GM12878 (cell line): ENCODE measurements at regions of chr15 and their contacts with region 1.

Region 1: DNA sequence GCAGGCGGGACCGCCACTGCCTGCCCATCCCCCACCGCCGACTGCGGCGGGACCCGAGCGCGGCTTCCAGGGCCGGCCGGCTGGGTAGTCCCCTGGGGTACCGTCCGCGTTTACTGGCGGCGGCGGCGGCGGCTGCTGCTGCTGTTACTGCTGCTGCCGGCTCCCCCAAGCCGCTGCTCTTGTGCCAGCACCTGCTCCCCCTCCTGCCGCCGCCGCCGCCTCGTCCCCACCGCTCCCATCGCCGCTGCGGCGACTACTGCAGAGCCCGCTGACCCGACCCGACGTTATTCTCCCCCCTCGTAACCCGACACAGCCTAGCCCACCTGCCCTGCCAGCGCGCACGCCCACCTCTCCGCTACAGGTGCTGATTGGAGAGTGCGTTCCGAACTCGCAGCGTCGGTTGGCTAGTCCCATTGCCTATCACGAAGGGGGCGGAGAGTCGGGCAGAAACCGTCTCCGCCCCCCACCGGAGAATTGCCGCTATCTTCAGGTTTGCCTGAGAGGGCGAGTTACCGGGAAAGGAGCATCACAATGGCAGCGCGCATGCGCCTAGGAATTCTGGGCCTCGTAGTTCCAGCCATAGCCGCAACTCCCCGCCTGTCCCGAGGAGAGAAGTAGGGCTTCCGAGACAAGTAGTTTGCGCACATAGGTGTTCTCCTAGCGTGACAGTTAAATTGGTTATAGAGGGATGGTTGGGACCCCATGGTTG is at the start of gene TTBK2:
- DNase-seq: peak; percentile 95
- ATAC-seq: peak; percentile 98
- H3K4me3 ChIP-seq: peak within 1 kb of the TSS; percentile 80
- H3K27ac ChIP-seq: peak within 1 kb of the TSS; percentile 64
- H3K4me1 ChIP-seq: peaks cover 12% of the 10 kb centered on the region
- H3K27me3 ChIP-seq: no peaks in the 10 kb centered on the region
- CTCF ChIP-seq: no peak
- EP300 ChIP-seq: no peak
- POLR2A ChIP-seq: peak; percentile 87
- RAD21 ChIP-seq: no peak
- polyA plus RNA-seq, gene TTBK2: 0.66 to 0.82 TPM

Region 2: GRCh38 chr15:42184296-42184695 is 736.4 kb before region 1 on chr15:
- CTCF ChIA-PET with region 1: no interaction called
- POLR2A ChIA-PET with region 1: no interaction called
- RAD21 ChIA-PET with region 1: no interaction called
- SMC1A ChIA-PET with region 1: no interaction called
- in situ Hi-C with region 1: no loop called
- intact Hi-C with region 1: no loop called
- DNase-seq: no peak
- ATAC-seq: peak; percentile 66
- H3K4me3 ChIP-seq: no peak overlapping the region
- H3K27ac ChIP-seq: no peak overlapping the region
- H3K4me1 ChIP-seq: peaks cover 5% of the 10 kb centered on the region
- H3K27me3 ChIP-seq: no peaks in the 10 kb centered on the region
- CTCF ChIP-seq: no peak
- EP300 ChIP-seq: no peak
- POLR2A ChIP-seq: no peak
- RAD21 ChIP-seq: no peak

Region 3: GRCh38 chr15:42404461-42405235 is 516.0 kb before region 1 on chr15:
- CTCF ChIA-PET with region 1: no interaction called
- POLR2A ChIA-PET with region 1: no interaction called
- RAD21 ChIA-PET with region 1: no interaction called
- SMC1A ChIA-PET with region 1: no interaction called
- in situ Hi-C with region 1: no loop called
- intact Hi-C with region 1: no loop called
- DNase-seq: no peak
- ATAC-seq: no peak
- H3K4me3 ChIP-seq: no peak overlapping the region
- H3K27ac ChIP-seq: no peak overlapping the region
- H3K4me1 ChIP-seq: peaks cover 14% of the 10 kb centered on the region
- H3K27me3 ChIP-seq: no peaks in the 10 kb centered on the region
- CTCF ChIP-seq: no peak
- EP300 ChIP-seq: no peak
- POLR2A ChIP-seq: no peak
- RAD21 ChIP-seq: no peak

Region 4: DNA sequence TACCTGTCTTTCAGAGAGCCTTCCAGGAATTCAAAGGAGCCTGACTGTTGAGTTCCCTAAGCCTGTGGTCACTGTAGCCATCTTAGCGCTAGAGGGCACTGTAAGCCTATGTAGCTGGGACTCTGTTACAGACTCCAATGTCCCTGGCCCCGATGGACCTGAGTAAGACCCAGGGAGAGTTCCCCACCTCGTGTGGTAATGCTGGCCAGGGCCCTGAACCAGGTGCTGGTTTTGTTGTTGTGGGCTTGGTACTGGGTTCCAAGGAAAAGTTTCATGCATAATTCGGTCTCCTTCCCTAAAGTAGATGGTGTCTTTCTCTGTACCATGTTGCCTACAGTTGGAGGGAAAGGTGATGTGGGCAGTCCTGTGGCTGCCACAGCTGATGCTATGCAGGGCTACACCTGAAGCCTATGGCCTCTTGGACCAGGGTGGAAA is 216.2 kb before region 1 on chr15:
- CTCF ChIA-PET with region 1: interaction called, 75 read pairs
- POLR2A ChIA-PET with region 1: no interaction called
- RAD21 ChIA-PET with region 1: interaction called, 22 read pairs
- SMC1A ChIA-PET with region 1: interaction called, 16 read pairs
- in situ Hi-C with region 1: loop called (anchors 10 kb)
- intact Hi-C with region 1: loop called (anchors 2 kb)
- DNase-seq: peak; percentile 24
- ATAC-seq: peak; percentile 100
- H3K4me3 ChIP-seq: no peak overlapping the region
- H3K27ac ChIP-seq: no peak overlapping the region
- H3K4me1 ChIP-seq: no peaks in the 10 kb centered on the region
- H3K27me3 ChIP-seq: no peaks in the 10 kb centered on the region
- CTCF ChIP-seq: peak; percentile 87 to 89 (median 89)
- EP300 ChIP-seq: no peak
- POLR2A ChIP-seq: no peak
- RAD21 ChIP-seq: peak; percentile 95

Region 5: GRCh38 chr15:42736793-42737528 is 183.7 kb before region 1 on chr15 and contains the start of gene CDAN1:
- CTCF ChIA-PET with region 1: interaction called, 26 read pairs
- POLR2A ChIA-PET with region 1: interaction called, 7 read pairs
- RAD21 ChIA-PET with region 1: interaction called, 6 read pairs
- SMC1A ChIA-PET with region 1: interaction called, 5 read pairs
- in situ Hi-C with region 1: no loop called
- intact Hi-C with region 1: loop called (anchors 10 kb)
- DNase-seq: no peak
- ATAC-seq: peak; percentile 97
- H3K4me3 ChIP-seq: peak within 1 kb of the TSS; percentile 88
- H3K27ac ChIP-seq: peak within 1 kb of the TSS; percentile 76
- H3K4me1 ChIP-seq: peaks cover 18% of the 10 kb centered on the region
- H3K27me3 ChIP-seq: no peaks in the 10 kb centered on the region
- CTCF ChIP-seq: no peak
- EP300 ChIP-seq: no peak
- POLR2A ChIP-seq: peak; percentile 93
- RAD21 ChIP-seq: no peak
- polyA plus RNA-seq, gene CDAN1: 0.56 to 1.6 TPM

Region 6: GRCh38 chr15:42800731-42801474 is 119.8 kb before region 1 on chr15:
- CTCF ChIA-PET with region 1: interaction called, 23 read pairs
- POLR2A ChIA-PET with region 1: no interaction called
- RAD21 ChIA-PET with region 1: interaction called, 6 read pairs
- SMC1A ChIA-PET with region 1: interaction called, 3 read pairs
- in situ Hi-C with region 1: no loop called
- intact Hi-C with region 1: no loop called
- DNase-seq: no peak
- ATAC-seq: no peak
- H3K4me3 ChIP-seq: no peak overlapping the region
- H3K27ac ChIP-seq: no peak overlapping the region
- H3K4me1 ChIP-seq: no peaks in the 10 kb centered on the region
- H3K27me3 ChIP-seq: no peaks in the 10 kb centered on the region
- CTCF ChIP-seq: peak in 2 of 3 experiments; percentile 11 to 28; a peak in 1 of 6 replicates
- EP300 ChIP-seq: no peak
- POLR2A ChIP-seq: no peak
- RAD21 ChIP-seq: peak; percentile 30; the same call in 1 of the 2 replicates

Region 7: DNA sequence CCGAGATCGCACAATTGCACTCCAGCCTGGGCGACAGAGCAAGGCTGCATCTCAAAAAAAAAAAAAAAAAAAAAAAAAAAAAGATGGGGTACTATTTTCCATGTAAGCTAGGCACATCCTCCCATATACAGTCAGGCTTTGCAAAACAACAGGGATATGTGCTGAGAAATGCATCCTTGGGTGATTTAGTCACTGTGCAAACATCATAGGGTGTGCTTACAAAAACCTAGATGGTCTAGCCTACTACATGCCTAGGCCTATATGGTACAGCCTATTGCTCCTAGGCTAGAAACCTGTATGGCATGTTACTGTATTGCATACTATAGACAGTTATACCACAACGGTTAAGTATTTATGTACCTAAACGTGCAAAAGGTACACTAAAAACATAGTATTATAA is 75.1 kb before region 1 on chr15:
- CTCF ChIA-PET with region 1: no interaction called
- POLR2A ChIA-PET with region 1: no interaction called
- RAD21 ChIA-PET with region 1: no interaction called
- SMC1A ChIA-PET with region 1: no interaction called
- in situ Hi-C with region 1: no loop called
- intact Hi-C with region 1: no loop called
- DNase-seq: no peak
- ATAC-seq: no peak
- H3K4me3 ChIP-seq: no peak overlapping the region
- H3K27ac ChIP-seq: no peak overlapping the region
- H3K4me1 ChIP-seq: no peaks in the 10 kb centered on the region
- H3K27me3 ChIP-seq: no peaks in the 10 kb centered on the region
- CTCF ChIP-seq: no peak
- EP300 ChIP-seq: no peak
- POLR2A ChIP-seq: no peak
- RAD21 ChIP-seq: no peak

Region 8: GRCh38 chr15:43150191-43150929 is 229.7 kb after region 1 on chr15:
- CTCF ChIA-PET with region 1: no interaction called
- POLR2A ChIA-PET with region 1: no interaction called
- RAD21 ChIA-PET with region 1: no interaction called
- SMC1A ChIA-PET with region 1: no interaction called
- in situ Hi-C with region 1: no loop called
- intact Hi-C with region 1: no loop called
- DNase-seq: no peak
- ATAC-seq: no peak
- H3K4me3 ChIP-seq: no peak overlapping the region
- H3K27ac ChIP-seq: no peak overlapping the region
- H3K4me1 ChIP-seq: no peaks in the 10 kb centered on the region
- H3K27me3 ChIP-seq: no peaks in the 10 kb centered on the region
- CTCF ChIP-seq: no peak
- EP300 ChIP-seq: no peak
- POLR2A ChIP-seq: no peak
- RAD21 ChIP-seq: no peak